Activated CD4-positive, alpha-beta memory T cell treated with anti-CD3 and anti-CD28 coated beads for 36 hours (primary cell): ENCODE measurements at regions of chr2 and their contacts with region 1.

Region 1: GRCh38 chr2:105143467-105144151 is 97.9 kb upstream of the GPR45 start:
- DNase-seq: peak; percentile 31
- H3K4me3 Mint-ChIP-seq: peak overlapping the region; percentile 63
- H3K27ac Mint-ChIP-seq: no peak overlapping the region
- H3K4me1 Mint-ChIP-seq: peaks cover 8% of the 10 kb centered on the region
- H3K27me3 Mint-ChIP-seq: peaks cover 38% of the 10 kb centered on the region

Region 2: GRCh38 chr2:105127289-105127915 is 16.2 kb before region 1 on chr2:
- CTCF ChIA-PET with region 1: no interaction called
- POLR2A ChIA-PET with region 1: no interaction called
- intact Hi-C with region 1: loop called (anchors 1 kb)
- DNase-seq: peak; percentile 22
- H3K4me3 Mint-ChIP-seq: no peak overlapping the region
- H3K27ac Mint-ChIP-seq: no peak overlapping the region
- H3K4me1 Mint-ChIP-seq: no peaks in the 10 kb centered on the region
- H3K27me3 Mint-ChIP-seq: peaks cover 3% of the 10 kb centered on the region